CD8-positive, alpha-beta T cell (primary cell): ENCODE measurements at regions of chr7 and their contacts with region 1.

Region 1: GRCh38 chr7:128398016-128398840 is 11.6 kb downstream of the IMPDH1 start:
- DNase-seq: peak in 8 of 9 experiments; percentile 27 to 65 (median 50)
- ATAC-seq: peak; percentile 75
- H3K4me3 ChIP-seq: no peak overlapping the region
- H3K4me3 Mint-ChIP-seq: no peak overlapping the region
- H3K27ac ChIP-seq: no peak overlapping the region
- H3K27ac Mint-ChIP-seq: no peak overlapping the region
- H3K4me1 ChIP-seq: no peaks in the 10 kb centered on the region
- H3K4me1 Mint-ChIP-seq: peaks cover 3% of the 10 kb centered on the region
- H3K27me3 ChIP-seq: no peaks in the 10 kb centered on the region
- H3K27me3 Mint-ChIP-seq: no peaks in the 10 kb centered on the region
- CTCF ChIP-seq: peak; percentile 91

Region 2: DNA sequence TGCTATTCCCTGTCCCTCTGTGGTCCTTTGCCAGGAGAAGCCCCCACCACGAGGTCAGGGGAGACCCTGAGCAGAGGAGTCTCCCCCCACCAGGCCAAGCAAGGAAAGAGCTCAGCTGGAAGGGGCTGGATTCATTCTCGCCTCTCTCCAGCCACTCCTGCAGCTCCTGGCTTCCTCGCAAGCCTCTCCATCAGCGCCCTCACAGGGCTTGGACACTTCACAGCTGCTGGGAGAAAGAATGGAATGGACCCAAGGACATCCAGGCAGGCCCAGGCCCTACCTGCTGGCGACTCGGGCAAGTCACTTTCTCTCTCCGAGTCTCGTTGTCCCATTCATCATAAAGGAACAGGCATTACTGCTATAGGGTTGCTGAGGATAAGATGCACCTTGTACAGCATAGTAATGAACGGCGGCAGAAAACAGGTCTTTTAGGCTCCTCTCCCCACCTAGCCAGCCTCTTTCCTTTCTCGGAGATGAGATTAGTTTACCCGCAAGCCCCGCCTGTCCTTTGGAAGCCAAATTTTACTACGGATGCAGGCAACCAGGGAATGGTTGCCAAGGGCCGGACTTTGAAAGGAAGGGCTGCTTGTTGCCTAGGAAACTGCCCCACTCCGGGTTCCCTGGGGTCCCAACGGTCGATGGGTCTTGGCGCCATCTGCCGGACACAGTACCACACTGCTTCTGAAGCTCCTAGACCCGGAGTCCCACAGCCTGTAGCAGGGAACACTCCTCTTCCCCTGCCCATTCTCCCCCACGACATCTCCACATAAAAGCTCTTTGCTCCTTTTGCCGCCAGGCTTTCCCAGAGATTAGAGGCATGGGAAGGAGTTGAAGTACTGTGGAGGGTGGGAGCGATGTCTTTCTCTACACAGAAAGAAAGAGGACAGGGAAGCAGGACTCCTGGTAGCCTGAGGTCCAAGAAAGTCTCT is 10.7 kb before region 1 on chr7:
- CTCF ChIA-PET with region 1: interaction called, 16 read pairs
- POLR2A ChIA-PET with region 1: no interaction called
- intact Hi-C with region 1: no loop called
- DNase-seq: peak; percentile 49 to 77 (median 71)
- ATAC-seq: peak; percentile 98
- H3K4me3 ChIP-seq: no peak overlapping the region
- H3K4me3 Mint-ChIP-seq: no peak overlapping the region
- H3K27ac ChIP-seq: no peak overlapping the region
- H3K27ac Mint-ChIP-seq: no peak overlapping the region
- H3K4me1 ChIP-seq: no peaks in the 10 kb centered on the region
- H3K4me1 Mint-ChIP-seq: no peaks in the 10 kb centered on the region
- H3K27me3 ChIP-seq: no peaks in the 10 kb centered on the region
- H3K27me3 Mint-ChIP-seq: no peaks in the 10 kb centered on the region
- CTCF ChIP-seq: peak; percentile 73

Region 3: GRCh38 chr7:128415217-128415785 is 17.1 kb after region 1 on chr7:
- CTCF ChIA-PET with region 1: interaction called, 69 read pairs
- POLR2A ChIA-PET with region 1: interaction called, 3 read pairs
- intact Hi-C with region 1: no loop called
- DNase-seq: no peak
- ATAC-seq: no peak
- H3K4me3 ChIP-seq: no peak overlapping the region
- H3K4me3 Mint-ChIP-seq: no peak overlapping the region
- H3K27ac ChIP-seq: no peak overlapping the region
- H3K27ac Mint-ChIP-seq: no peak overlapping the region
- H3K4me1 ChIP-seq: peaks cover 3% of the 10 kb centered on the region
- H3K4me1 Mint-ChIP-seq: peaks cover 3% of the 10 kb centered on the region
- H3K27me3 ChIP-seq: no peaks in the 10 kb centered on the region
- H3K27me3 Mint-ChIP-seq: no peaks in the 10 kb centered on the region
- CTCF ChIP-seq: no peak

Region 4: DNA sequence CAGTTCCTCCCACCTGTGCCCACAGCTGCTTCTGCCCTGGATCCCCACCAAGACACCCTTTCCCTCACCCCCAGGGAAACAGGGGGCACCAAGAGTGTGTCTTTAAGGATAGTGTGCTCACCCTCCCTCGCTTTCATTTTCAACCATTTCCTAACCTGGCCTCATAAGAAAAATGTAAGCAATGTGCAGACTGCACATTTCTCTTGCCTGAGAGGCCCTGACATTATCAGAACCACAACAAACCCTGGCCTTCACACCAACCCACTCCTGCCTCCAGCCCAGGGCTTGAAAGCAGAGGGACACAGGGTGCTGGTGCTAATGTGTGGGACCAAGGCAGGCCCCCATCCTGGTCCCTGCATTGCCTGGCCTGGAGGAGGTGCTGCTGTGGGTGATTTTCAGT is 22.5 kb after region 1 on chr7:
- CTCF ChIA-PET with region 1: interaction called, 389 read pairs
- POLR2A ChIA-PET with region 1: no interaction called
- intact Hi-C with region 1: loop called in 1 of 2 experiments (anchors 1 kb)
- DNase-seq: no peak
- ATAC-seq: no peak
- H3K4me3 ChIP-seq: no peak overlapping the region
- H3K4me3 Mint-ChIP-seq: no peak overlapping the region
- H3K27ac ChIP-seq: no peak overlapping the region
- H3K27ac Mint-ChIP-seq: no peak overlapping the region
- H3K4me1 ChIP-seq: no peaks in the 10 kb centered on the region
- H3K4me1 Mint-ChIP-seq: peaks cover 8% of the 10 kb centered on the region
- H3K27me3 ChIP-seq: no peaks in the 10 kb centered on the region
- H3K27me3 Mint-ChIP-seq: no peaks in the 10 kb centered on the region
- CTCF ChIP-seq: no peak

Region 5: DNA sequence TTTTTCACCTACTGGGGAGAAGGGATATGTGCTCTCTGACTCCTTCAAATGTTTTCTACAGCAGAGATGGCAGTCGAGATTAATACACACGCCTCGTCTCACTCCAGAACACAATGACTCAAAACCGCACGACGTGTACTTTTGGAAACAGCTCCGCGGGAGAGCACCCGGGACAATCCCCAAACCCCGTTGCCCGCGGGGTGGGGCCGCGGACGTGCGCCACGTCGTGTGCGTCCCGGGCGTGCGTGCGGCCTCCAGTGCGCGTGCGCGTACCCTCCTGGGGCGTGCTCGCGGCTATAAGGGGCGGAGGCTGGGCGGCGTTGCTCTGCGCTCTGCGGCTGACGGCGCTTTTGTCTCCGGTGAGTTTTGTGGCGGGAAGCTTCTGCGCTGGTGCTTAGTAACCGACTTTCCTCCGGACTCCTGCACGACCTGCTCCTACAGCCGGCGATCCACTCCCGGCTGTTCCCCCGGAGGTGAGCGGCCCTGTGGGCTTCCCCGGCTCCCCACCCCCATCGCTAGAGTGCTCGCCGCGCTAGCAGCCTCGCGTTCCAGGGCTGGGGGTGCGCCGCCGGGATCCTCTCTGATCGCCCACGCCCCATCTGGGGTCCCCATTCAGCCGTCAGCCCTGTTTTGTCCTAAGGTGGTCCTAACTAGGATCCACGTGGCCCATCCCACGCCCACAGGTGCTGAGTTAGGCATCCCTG is 57.5 kb after region 1 on chr7 and contains the start of gene HILPDA:
- CTCF ChIA-PET with region 1: interaction called, 58 read pairs
- POLR2A ChIA-PET with region 1: no interaction called
- intact Hi-C with region 1: loop called in 1 of 2 experiments (anchors 2 kb)
- DNase-seq: peak; percentile 84 to 98 (median 93)
- ATAC-seq: peak; percentile 92
- H3K4me3 ChIP-seq: peak within 1 kb of the TSS; percentile 83 to 91
- H3K4me3 Mint-ChIP-seq: peak within 1 kb of the TSS; percentile 95
- H3K27ac ChIP-seq: peak within 1 kb of the TSS; percentile 60 to 73
- H3K27ac Mint-ChIP-seq: peak within 1 kb of the TSS; percentile 98
- H3K4me1 ChIP-seq: peaks cover 19% of the 10 kb centered on the region
- H3K4me1 Mint-ChIP-seq: peaks cover 26% of the 10 kb centered on the region
- H3K27me3 ChIP-seq: no peaks in the 10 kb centered on the region
- H3K27me3 Mint-ChIP-seq: no peaks in the 10 kb centered on the region
- CTCF ChIP-seq: no peak
- total RNA-seq, gene HILPDA: 1.3 to 2.0 TPM